Ovary (tissue), 10 donors: ENCODE measurements at regions of chr1 and their contacts with region 1.

Region 1: GRCh38 chr1:114522258-114522575 is 11.2 kb upstream of the TRIM33 start:
- DNase-seq: no peak
- H3K4me3 ChIP-seq: no peak overlapping the region
- H3K27ac ChIP-seq: no peak overlapping the region
- H3K4me1 ChIP-seq: no peaks in the 10 kb centered on the region
- H3K27me3 ChIP-seq: no peaks in the 10 kb centered on the region
- CTCF ChIP-seq: no peak
- EP300 ChIP-seq: no peak
- POLR2A ChIP-seq: no peak

Region 2: DNA sequence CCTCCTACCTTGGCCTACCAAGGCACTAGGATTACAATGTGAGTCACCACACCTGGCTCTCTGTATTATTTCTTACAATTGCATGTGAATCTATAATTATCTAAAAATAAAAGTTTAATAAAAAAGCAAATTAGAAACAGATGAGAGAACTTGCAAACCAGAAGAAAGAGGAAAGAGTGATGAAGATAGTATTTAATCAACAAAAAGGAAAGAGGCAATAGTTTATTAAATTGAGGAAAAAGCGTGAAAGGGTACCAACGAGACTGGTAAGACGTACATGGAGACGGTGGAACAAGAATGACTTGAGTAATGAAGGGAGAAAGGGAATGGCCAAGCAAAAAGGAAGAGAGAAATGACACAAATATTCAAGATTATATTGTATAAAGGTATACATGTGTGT is 46.8 kb after region 1 on chr1:
- intact Hi-C with region 1: loop called in 1 of 4 experiments (anchors 2 kb)
- DNase-seq: no peak
- H3K4me3 ChIP-seq: no peak overlapping the region
- H3K27ac ChIP-seq: no peak overlapping the region
- H3K4me1 ChIP-seq: no peaks in the 10 kb centered on the region
- H3K27me3 ChIP-seq: no peaks in the 10 kb centered on the region
- CTCF ChIP-seq: no peak
- EP300 ChIP-seq: no peak
- POLR2A ChIP-seq: no peak